Activated CD8-positive, alpha-beta T cell treated with anti-CD3 and anti-CD28 coated beads for 36 hours (primary cell): ENCODE measurements at regions of chr10 and their contacts with region 1.

Region 1: DNA sequence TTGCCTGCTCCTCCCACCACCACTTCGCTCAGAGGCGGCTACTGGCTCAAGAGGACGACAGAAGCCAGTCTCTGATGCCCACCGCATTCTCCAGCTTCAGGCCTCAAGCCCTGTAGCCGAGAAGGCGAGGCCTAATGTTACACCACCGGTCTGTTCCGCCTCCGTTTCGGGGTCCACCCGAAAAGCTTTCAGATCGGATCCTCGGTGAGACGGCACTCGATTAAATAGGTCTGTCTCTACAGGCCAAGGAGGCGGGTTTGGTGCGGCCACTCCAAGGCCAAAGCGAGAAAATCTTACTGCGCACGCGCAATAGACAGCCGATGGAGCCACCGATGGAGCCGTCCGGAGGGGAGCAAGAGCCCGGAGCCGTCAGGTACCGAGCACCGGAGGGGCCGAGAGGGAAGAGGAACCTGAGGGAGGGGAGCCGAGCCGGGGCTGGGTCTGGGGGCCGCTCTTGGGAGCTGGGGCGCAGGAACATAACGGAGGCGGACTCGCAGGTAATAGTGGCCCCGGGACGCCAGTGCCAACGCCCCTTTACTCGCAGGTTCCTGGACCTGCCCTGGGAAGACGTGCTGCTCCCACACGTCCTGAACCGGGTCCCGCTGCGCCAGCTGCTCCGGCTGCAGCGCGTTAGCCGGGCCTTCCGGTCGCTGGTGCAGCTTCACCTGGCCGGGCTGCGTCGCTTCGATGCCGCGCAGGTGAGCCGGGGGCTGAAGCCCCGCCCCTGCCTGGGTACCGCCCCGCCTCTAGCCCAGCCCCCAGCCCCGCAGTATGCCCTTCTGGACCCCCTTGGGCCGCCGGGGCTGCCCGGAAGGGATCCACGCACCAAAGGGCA is at the start of gene FBXL15:
- DNase-seq: peak; percentile 98
- ATAC-seq: peak; percentile 85
- H3K4me3 Mint-ChIP-seq: peak within 1 kb of the TSS; percentile 87
- H3K27ac Mint-ChIP-seq: peak within 1 kb of the TSS; percentile 91
- H3K4me1 Mint-ChIP-seq: peaks cover 27% of the 10 kb centered on the region
- H3K27me3 Mint-ChIP-seq: peaks cover 14% of the 10 kb centered on the region
- CTCF ChIP-seq: no peak
- total RNA-seq, gene FBXL15: 14.1 to 15.7 TPM

Region 2: DNA sequence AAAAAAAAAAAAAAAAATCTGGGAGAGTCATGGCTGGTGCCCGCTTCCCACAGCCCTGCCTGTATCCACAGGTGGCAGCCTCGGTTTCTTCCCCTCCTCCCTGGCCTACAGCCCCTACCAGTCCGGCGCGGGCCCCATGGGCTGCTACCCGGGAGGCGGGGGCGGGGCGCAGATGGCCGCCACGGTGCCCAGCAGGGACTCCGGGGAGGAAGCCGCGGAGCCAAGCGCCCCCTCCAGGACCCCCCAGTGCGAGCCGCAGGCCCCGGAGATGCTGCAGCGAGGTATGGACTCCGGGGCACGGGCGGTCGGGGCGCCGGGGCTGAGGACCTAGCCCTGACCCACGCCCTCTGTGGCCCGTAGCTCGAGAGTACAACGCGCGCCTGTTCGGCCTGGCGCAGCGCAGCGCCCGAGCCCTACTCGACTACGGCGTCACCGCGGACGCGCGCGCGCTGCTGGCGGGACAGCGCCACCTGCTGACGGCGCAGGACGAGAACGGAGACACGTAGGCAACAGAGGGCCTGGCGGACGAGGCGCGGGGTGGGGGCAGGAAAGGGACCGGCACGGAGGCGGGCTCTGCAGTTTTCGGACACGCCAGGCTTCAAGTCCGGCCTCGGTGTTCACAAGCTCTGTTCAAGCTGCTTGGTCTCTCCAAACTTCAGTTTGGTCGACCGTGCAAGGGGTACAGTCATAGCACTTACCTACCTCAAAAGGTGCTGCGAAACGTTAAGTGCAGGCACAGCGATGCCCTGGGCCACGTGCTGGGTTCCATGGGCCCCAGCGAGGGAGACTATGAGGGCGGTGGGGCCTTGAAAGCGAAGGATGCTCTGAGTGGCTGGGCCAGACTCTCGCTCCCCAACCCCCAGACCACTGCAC is 21.6 kb before region 1 on chr10:
- CTCF ChIA-PET with region 1: interaction called, 143 read pairs
- POLR2A ChIA-PET with region 1: interaction called, 44 read pairs
- intact Hi-C with region 1: no loop called
- DNase-seq: peak; percentile 92
- ATAC-seq: peak; percentile 58
- H3K4me3 Mint-ChIP-seq: peak overlapping the region; percentile 93
- H3K27ac Mint-ChIP-seq: peak overlapping the region; percentile 86
- H3K4me1 Mint-ChIP-seq: peaks cover 47% of the 10 kb centered on the region
- H3K27me3 Mint-ChIP-seq: no peaks in the 10 kb centered on the region
- CTCF ChIP-seq: peak; percentile 98

Region 3: GRCh38 chr10:102408728-102409603 is 12.1 kb before region 1 on chr10:
- CTCF ChIA-PET with region 1: interaction called, 143 read pairs
- POLR2A ChIA-PET with region 1: interaction called, 37 read pairs
- intact Hi-C with region 1: no loop called
- DNase-seq: peak; percentile 91
- ATAC-seq: peak; percentile 73
- H3K4me3 Mint-ChIP-seq: peak overlapping the region; percentile 80
- H3K27ac Mint-ChIP-seq: peak overlapping the region; percentile 62
- H3K4me1 Mint-ChIP-seq: peaks cover 42% of the 10 kb centered on the region
- H3K27me3 Mint-ChIP-seq: peaks cover 7% of the 10 kb centered on the region
- CTCF ChIP-seq: no peak

Region 4: GRCh38 chr10:102432162-102432950 is 11.3 kb after region 1 on chr10 and contains the start of gene CUEDC2:
- CTCF ChIA-PET with region 1: interaction called, 23 read pairs
- POLR2A ChIA-PET with region 1: interaction called, 73 read pairs
- intact Hi-C with region 1: no loop called
- DNase-seq: peak; percentile 98
- ATAC-seq: peak; percentile 93
- H3K4me3 Mint-ChIP-seq: peak within 1 kb of the TSS; percentile 95
- H3K27ac Mint-ChIP-seq: peak within 1 kb of the TSS; percentile 94
- H3K4me1 Mint-ChIP-seq: peaks cover 42% of the 10 kb centered on the region
- H3K27me3 Mint-ChIP-seq: no peaks in the 10 kb centered on the region
- CTCF ChIP-seq: no peak
- total RNA-seq, gene CUEDC2: 71.8 to 76.4 TPM

Region 5: GRCh38 chr10:102450194-102450938 is 29.3 kb after region 1 on chr10:
- CTCF ChIA-PET with region 1: interaction called, 34 read pairs
- POLR2A ChIA-PET with region 1: interaction called, 71 read pairs
- intact Hi-C with region 1: no loop called
- DNase-seq: peak; percentile 87
- ATAC-seq: peak; percentile 60
- H3K4me3 Mint-ChIP-seq: peak overlapping the region; percentile 96
- H3K27ac Mint-ChIP-seq: peak overlapping the region; percentile 94
- H3K4me1 Mint-ChIP-seq: peaks cover 26% of the 10 kb centered on the region
- H3K27me3 Mint-ChIP-seq: no peaks in the 10 kb centered on the region
- CTCF ChIP-seq: no peak

Region 6: DNA sequence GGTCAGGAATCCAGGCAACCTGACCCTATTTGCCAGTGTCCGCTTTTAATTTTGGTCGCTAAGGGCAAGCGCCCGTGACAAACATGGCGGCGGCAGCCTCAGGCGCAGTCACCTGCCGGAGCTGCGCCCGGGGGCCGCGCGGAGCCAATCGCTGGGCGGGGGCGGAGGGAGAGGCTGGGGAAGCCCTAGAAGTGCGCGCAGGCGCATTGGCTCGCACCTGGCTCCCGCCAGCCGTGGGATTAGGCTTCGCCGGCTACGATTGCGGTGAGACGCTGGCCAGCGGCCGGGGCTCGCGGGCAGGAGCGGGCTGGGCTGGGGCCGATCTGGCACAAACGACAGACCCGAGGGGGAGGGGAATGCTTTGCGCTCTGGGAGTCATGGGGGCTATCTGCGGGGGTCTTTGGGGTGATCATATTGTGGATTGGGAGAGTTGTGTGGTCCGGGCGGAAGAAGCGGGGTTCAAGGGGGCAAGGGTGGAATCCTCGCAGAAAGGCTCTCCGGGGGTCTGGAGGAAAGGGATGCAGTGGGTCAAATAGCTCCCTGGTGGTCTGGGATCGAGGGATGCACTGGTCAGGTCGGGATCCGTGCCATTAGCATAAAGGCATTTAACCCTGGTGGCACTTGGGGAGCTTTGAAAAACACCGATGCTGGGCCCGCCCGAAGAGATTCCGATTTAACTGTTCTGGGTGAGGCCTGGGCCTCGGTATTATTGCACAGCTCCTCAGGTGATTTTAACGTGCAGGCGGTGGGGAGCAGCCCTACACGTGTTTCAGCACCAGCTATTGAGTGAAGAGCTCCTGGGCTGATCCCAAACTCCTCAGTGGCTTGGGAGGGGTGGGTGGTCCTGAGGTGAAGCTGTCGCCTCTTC is 40.4 kb after region 1 on chr10:
- CTCF ChIA-PET with region 1: interaction called, 14 read pairs
- POLR2A ChIA-PET with region 1: interaction called, 8 read pairs
- intact Hi-C with region 1: no loop called
- DNase-seq: peak; percentile 95
- ATAC-seq: peak; percentile 96
- H3K4me3 Mint-ChIP-seq: peak overlapping the region; percentile 91
- H3K27ac Mint-ChIP-seq: peak overlapping the region; percentile 80
- H3K4me1 Mint-ChIP-seq: peaks cover 27% of the 10 kb centered on the region
- H3K27me3 Mint-ChIP-seq: no peaks in the 10 kb centered on the region
- CTCF ChIP-seq: no peak